Activated T-helper 1 cell treated with anti-CD3 and anti-CD28 coated beads, Interleukin-12 subunit alpha, Interleukin-12 subunit beta, Interleukin-2, Interleukin-4 antibody, amounts not matched to agents 30 ng/mL and 10 ng/mL and 1 ng/mL, durations not matched to agents 14 hours and 24 hours and 36 hours (primary cell): ENCODE measurements at regions of chr3 and their contacts with region 1.

Region 1: DNA sequence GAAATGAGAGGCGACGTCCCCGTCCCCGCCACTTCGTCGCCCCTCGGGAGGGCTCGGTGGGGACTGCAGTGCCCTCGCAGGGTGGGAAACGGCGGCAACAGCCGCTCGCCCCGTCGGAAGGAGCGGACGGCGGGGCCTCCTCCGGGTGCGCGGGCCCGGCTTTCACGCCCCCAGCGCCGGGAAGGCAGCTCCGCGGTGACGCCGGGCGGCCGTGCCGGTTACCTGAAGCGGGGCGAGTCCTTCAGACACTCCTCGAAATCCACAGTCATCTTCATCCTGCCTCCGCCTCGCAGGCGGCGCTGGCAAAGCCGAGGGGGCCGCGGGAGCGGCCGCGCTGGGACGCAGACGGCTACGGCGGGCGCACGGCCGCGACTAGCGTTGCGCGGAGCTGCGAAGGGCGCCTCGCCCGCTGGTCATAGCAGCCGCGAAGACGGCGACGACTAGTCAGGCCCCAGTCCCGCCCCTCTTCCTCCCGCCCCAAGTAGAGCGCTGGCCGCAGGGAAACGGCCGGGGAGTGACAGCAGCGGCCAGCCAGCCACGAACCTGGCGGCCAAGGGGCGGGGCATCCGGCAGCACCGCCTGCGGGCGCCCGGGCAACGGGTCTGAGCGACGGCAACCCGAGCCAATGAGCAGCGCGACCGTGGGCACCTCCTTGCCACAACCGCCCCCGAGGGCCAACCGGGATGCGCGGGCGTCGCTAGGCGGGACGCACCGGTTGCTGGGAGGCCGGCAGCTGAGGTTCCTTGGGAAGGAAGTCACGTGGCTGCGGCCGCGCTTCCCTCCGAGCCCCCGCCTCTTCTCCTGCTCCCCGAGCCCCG is at the start of gene ACAP2:
- DNase-seq: peak; percentile 99
- H3K4me3 Mint-ChIP-seq: peak within 1 kb of the TSS; percentile 92
- H3K27ac Mint-ChIP-seq: peak within 1 kb of the TSS; percentile 86
- H3K4me1 Mint-ChIP-seq: peaks cover 42% of the 10 kb centered on the region
- H3K27me3 Mint-ChIP-seq: no peaks in the 10 kb centered on the region
- total RNA-seq, gene ACAP2: 38.2 and 46.3 TPM in 2 replicates

Region 2: DNA sequence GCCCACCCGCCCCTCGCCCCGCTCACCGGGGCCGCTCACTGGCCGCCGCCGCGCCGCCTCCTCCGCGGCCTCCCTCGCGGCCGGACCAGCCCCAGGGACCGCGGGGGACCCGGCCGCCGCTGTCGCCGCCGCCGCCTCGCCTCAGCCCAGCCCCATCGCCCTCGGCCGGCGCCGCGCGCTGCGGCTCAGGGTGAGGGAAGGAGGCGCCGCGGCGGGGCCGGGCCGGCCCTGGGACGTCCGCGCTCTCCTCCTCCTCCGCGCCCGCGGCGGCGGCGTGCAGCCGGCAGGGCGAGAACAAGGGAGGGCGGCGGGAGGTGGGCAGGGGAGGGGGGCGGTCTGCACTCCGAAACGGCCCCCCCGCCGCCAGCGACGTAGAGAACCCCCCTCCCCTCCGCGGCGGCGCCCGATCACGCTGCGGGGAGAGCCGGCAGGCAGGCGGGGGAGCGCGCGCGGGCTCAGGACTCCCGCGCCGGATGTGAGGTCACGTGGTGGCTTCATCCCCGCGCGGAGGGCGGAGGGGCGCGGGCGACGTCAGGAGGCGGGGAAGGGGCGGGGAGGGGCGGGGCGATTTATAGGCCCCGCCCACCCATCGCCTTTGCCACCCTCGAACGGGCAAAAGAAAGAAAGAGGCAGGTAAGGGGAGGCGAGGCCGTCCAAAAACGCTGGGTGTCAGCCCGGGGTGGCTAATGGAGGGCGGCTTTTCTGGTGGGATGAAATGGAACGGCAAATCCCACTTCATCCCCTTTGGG is 956.1 kb before region 1 on chr3 and contains the start of gene ATP13A3:
- intact Hi-C with region 1: loop called (anchors 10 kb)
- DNase-seq: peak; percentile 87
- H3K4me3 Mint-ChIP-seq: peak within 1 kb of the TSS; percentile 96
- H3K27ac Mint-ChIP-seq: peak within 1 kb of the TSS; percentile 95
- H3K4me1 Mint-ChIP-seq: peaks cover 55% of the 10 kb centered on the region
- H3K27me3 Mint-ChIP-seq: peaks cover 1% of the 10 kb centered on the region
- total RNA-seq, gene ATP13A3: 198 and 206 TPM in 2 replicates

Region 3: GRCh38 chr3:195407531-195408409 is 35.0 kb before region 1 on chr3:
- intact Hi-C with region 1: loop called (anchors 1 kb)
- DNase-seq: no peak
- H3K4me3 Mint-ChIP-seq: peak overlapping the region; percentile 68
- H3K27ac Mint-ChIP-seq: peak overlapping the region; percentile 69
- H3K4me1 Mint-ChIP-seq: peaks cover 40% of the 10 kb centered on the region
- H3K27me3 Mint-ChIP-seq: peaks cover 5% of the 10 kb centered on the region

Region 4: GRCh38 chr3:195467641-195468390 is 25.0 kb after region 1 on chr3:
- intact Hi-C with region 1: loop called (anchors 2 kb)
- DNase-seq: peak; percentile 12
- H3K4me3 Mint-ChIP-seq: peak overlapping the region; percentile 50
- H3K27ac Mint-ChIP-seq: peak overlapping the region; percentile 61
- H3K4me1 Mint-ChIP-seq: peaks cover 12% of the 10 kb centered on the region
- H3K27me3 Mint-ChIP-seq: no peaks in the 10 kb centered on the region

Region 5: DNA sequence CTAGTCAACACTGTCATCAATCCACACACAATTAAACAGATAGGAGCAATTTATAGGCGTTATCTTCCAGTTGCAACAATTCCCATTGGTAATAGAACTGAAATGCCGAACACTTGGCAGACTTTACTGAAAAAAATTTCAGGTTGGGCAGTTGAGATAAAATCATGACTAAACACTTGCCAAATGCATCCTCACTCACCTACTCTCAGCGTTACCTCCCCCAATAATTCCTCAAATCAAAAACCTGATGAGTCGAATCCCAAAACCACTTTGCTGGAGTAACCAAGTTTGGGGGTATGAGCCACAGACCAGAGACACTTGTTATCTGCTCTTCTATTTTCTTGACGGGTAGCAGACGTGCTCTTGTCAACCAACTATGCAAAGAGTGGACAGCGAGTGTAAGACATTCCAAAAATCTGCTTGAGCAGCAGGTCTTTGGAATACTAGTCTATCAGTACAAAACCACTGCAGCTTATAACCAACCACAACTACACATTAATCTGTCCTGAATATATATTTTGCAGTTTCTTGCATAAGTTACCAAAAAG is 70.1 kb after region 1 on chr3:
- intact Hi-C with region 1: no loop called
- DNase-seq: no peak
- H3K4me3 Mint-ChIP-seq: no peak overlapping the region
- H3K27ac Mint-ChIP-seq: no peak overlapping the region
- H3K4me1 Mint-ChIP-seq: peaks cover 6% of the 10 kb centered on the region
- H3K27me3 Mint-ChIP-seq: no peaks in the 10 kb centered on the region

Region 6: GRCh38 chr3:195542698-195543499 is 100.1 kb after region 1 on chr3 and contains the start of gene PPP1R2:
- intact Hi-C with region 1: loop called (anchors 1 kb)
- DNase-seq: peak; percentile 88
- H3K4me3 Mint-ChIP-seq: peak within 1 kb of the TSS; percentile 88
- H3K27ac Mint-ChIP-seq: peak within 1 kb of the TSS; percentile 82
- H3K4me1 Mint-ChIP-seq: peaks cover 84% of the 10 kb centered on the region
- H3K27me3 Mint-ChIP-seq: no peaks in the 10 kb centered on the region
- total RNA-seq, gene PPP1R2: 98.8 and 106 TPM in 2 replicates